ENCODE measurements at regions of chrX and their contacts with region 1.

Region 1: GRCh38 chrX:78517124-78517523 is 142.0 kb downstream of the RTL3 start:
- DNase-seq: peak in 13 of 14 experiments; percentile 12 to 92 (median 45)
- ATAC-seq: peak; percentile 88
- H3K4me3 ChIP-seq: peak overlapping the region; percentile 12
- H3K4me3 Mint-ChIP-seq: peak overlapping the region; percentile 36
- H3K27ac ChIP-seq: peak overlapping the region; percentile 9 to 30
- H3K27ac Mint-ChIP-seq: peak overlapping the region; percentile 85
- H3K4me1 ChIP-seq: peaks cover 9% of the 10 kb centered on the region
- H3K4me1 Mint-ChIP-seq: peaks cover 53% of the 10 kb centered on the region
- H3K27me3 ChIP-seq: no peaks in the 10 kb centered on the region
- H3K27me3 Mint-ChIP-seq: no peaks in the 10 kb centered on the region
- CTCF ChIP-seq: no peak

Region 2: GRCh38 chrX:78139160-78140123 is 377.7 kb before region 1 on chrX and contains the start of gene TAF9B:
- CTCF ChIA-PET with region 1: no interaction called
- POLR2A ChIA-PET with region 1: interaction called, 3 read pairs
- intact Hi-C with region 1: loop called in 1 of 2 experiments (anchors 5 kb)
- DNase-seq: peak; percentile 68 to 92 (median 78)
- ATAC-seq: peak; percentile 99
- H3K4me3 ChIP-seq: peak within 1 kb of the TSS; percentile 93
- H3K4me3 Mint-ChIP-seq: peak within 1 kb of the TSS; percentile 96
- H3K27ac ChIP-seq: peak within 1 kb of the TSS; percentile 65 to 77
- H3K27ac Mint-ChIP-seq: peak within 1 kb of the TSS; percentile 94
- H3K4me1 ChIP-seq: peaks cover 11% of the 10 kb centered on the region
- H3K4me1 Mint-ChIP-seq: peaks cover 21% of the 10 kb centered on the region
- H3K27me3 ChIP-seq: no peaks in the 10 kb centered on the region
- H3K27me3 Mint-ChIP-seq: no peaks in the 10 kb centered on the region
- CTCF ChIP-seq: no peak
- total RNA-seq, gene TAF9B: 9.6 to 10.3 TPM

Region 3: GRCh38 chrX:78333521-78333920 is 183.6 kb before region 1 on chrX:
- CTCF ChIA-PET with region 1: no interaction called
- POLR2A ChIA-PET with region 1: no interaction called
- intact Hi-C with region 1: loop called in 1 of 2 experiments (anchors 1 kb)
- DNase-seq: peak in 4 of 14 experiments; percentile 8 to 84 (median 74)
- ATAC-seq: peak; percentile 86
- H3K4me3 ChIP-seq: no peak overlapping the region
- H3K4me3 Mint-ChIP-seq: peak overlapping the region; percentile 40
- H3K27ac ChIP-seq: peak overlapping the region; percentile 43 to 80
- H3K27ac Mint-ChIP-seq: peak overlapping the region; percentile 87
- H3K4me1 ChIP-seq: peaks cover 18% of the 10 kb centered on the region
- H3K4me1 Mint-ChIP-seq: peaks cover 82% of the 10 kb centered on the region
- H3K27me3 ChIP-seq: no peaks in the 10 kb centered on the region
- H3K27me3 Mint-ChIP-seq: no peaks in the 10 kb centered on the region
- CTCF ChIP-seq: no peak

Measured in CD4-positive, alpha-beta T cell (primary cell).